IMR-90 (cell line): ENCODE measurements at regions of chr13 and their contacts with region 1.

Region 1: GRCh38 chr13:31909864-31910551 is 121.6 kb upstream of the FRY start:
- DNase-seq: peak; percentile 70
- ATAC-seq: peak; percentile 66
- H3K4me3 ChIP-seq: no peak overlapping the region
- H3K27ac ChIP-seq: no peak overlapping the region
- H3K4me1 ChIP-seq: no peaks in the 10 kb centered on the region; the same call in 1 of the 2 replicates
- H3K27me3 ChIP-seq: peaks cover 8% of the 10 kb centered on the region; the same call in 1 of the 2 replicates
- CTCF ChIP-seq: peak; percentile 90
- POLR2A ChIP-seq: no peak
- RAD21 ChIP-seq: peak; percentile 88

Region 2: DNA sequence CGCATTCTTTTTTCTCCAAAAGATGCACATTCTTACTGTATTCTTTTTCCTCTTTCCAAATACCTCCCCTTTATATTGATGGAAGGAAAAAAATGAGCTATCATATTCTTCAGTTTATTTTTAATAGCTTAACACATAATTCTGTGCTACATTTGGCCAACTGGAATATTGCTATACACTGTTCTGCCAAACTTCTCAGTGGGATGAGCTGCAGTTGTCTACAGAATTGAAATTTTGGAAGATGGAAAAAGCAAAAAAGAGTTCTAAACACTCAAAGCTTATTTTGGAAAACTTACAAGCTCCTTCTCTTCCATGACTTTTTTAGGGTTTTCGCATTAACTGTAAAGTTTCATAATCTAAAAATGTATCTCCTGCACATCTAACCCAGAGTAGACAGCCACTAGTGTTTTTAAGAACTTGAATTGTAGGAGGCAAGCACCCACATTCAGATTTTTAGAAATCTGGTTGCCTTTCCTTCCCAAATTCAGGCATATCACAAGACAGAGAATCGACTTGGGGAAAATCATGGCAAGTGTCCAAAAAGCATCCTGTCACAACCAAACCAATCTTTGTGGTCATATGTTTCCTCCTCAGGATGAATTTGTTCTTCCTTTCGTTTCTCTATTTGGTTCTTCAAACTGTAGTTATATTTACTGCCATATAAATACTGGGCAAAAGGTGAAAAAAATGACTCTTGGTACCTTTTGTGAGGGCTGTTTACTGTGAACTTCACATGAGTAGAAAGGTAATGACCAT is 10.1 kb after region 1 on chr13:
- CTCF ChIA-PET with region 1: interaction called, 27 read pairs
- POLR2A ChIA-PET with region 1: no interaction called
- dilution Hi-C with region 1: no loop called
- in situ Hi-C with region 1: no loop called
- intact Hi-C with region 1: no loop called
- DNase-seq: no peak
- ATAC-seq: no peak; the same call in 1 of the 2 replicates
- H3K4me3 ChIP-seq: no peak overlapping the region
- H3K27ac ChIP-seq: peak overlapping the region; percentile 67; the same call in 1 of the 2 replicates
- H3K4me1 ChIP-seq: peaks cover 2% of the 10 kb centered on the region; the same call in 1 of the 2 replicates
- H3K27me3 ChIP-seq: no peaks in the 10 kb centered on the region
- CTCF ChIP-seq: no peak
- POLR2A ChIP-seq: no peak
- RAD21 ChIP-seq: no peak

Region 3: GRCh38 chr13:32031025-32031814 is 121.2 kb after region 1 on chr13 and contains the start of gene FRY:
- CTCF ChIA-PET with region 1: interaction called, 6 read pairs
- POLR2A ChIA-PET with region 1: no interaction called
- dilution Hi-C with region 1: no loop called
- in situ Hi-C with region 1: no loop called
- intact Hi-C with region 1: loop called (anchors 5 kb)
- DNase-seq: peak; percentile 58
- ATAC-seq: peak; percentile 89
- H3K4me3 ChIP-seq: peak within 1 kb of the TSS; percentile 65
- H3K27ac ChIP-seq: peak within 1 kb of the TSS; percentile 56
- H3K4me1 ChIP-seq: peaks cover 8% of the 10 kb centered on the region
- H3K27me3 ChIP-seq: no peaks in the 10 kb centered on the region
- CTCF ChIP-seq: 0 out of 2 replicates have a peak, but pooled peaks have one; percentile 2
- POLR2A ChIP-seq: no peak
- RAD21 ChIP-seq: no peak; the same call in 1 of the 2 replicates
- total RNA-seq, gene FRY: 3.0 and 4.2 TPM in 2 replicates

Region 4: DNA sequence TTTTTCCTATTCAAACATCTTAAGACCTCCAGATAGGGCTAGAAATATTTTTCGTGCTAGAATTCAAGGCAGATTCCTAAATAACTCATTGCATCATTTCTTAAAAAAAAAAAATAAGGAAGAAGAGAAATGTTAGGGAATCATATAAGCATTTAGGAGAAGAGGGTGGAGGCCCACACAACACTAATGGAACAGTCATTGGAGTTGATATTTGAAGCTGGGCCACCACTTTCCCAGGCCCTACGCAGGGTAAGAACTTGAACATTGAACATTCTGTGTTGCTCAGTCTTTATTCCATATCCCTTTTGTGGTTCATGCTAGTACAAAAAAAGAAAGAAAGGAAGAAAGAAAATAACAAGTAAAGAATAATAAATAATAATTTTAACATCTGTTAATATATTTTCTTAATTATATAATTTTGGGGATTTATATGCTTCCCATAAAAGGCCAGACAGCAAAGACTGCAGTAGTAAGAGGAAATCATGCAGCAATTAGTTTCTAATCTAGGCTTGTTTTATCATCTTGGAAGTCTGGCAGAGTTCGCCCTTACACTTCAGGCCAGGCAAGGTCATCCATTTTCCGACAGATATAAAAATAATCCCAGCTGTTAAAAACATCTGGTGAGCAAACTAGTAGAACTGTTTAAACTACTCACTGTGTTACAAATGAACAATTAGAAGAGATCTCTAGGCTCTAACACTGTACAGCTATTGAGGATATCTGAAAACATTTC is 249.3 kb after region 1 on chr13:
- CTCF ChIA-PET with region 1: no interaction called
- POLR2A ChIA-PET with region 1: no interaction called
- dilution Hi-C with region 1: no loop called
- in situ Hi-C with region 1: no loop called
- intact Hi-C with region 1: loop called (anchors 5 kb)
- DNase-seq: peak; percentile 45
- ATAC-seq: peak; percentile 80
- H3K4me3 ChIP-seq: no peak overlapping the region
- H3K27ac ChIP-seq: peak overlapping the region; percentile 79; the same call in 1 of the 2 replicates
- H3K4me1 ChIP-seq: peaks cover 9% of the 10 kb centered on the region
- H3K27me3 ChIP-seq: no peaks in the 10 kb centered on the region
- CTCF ChIP-seq: no peak
- POLR2A ChIP-seq: no peak
- RAD21 ChIP-seq: no peak

Region 5: DNA sequence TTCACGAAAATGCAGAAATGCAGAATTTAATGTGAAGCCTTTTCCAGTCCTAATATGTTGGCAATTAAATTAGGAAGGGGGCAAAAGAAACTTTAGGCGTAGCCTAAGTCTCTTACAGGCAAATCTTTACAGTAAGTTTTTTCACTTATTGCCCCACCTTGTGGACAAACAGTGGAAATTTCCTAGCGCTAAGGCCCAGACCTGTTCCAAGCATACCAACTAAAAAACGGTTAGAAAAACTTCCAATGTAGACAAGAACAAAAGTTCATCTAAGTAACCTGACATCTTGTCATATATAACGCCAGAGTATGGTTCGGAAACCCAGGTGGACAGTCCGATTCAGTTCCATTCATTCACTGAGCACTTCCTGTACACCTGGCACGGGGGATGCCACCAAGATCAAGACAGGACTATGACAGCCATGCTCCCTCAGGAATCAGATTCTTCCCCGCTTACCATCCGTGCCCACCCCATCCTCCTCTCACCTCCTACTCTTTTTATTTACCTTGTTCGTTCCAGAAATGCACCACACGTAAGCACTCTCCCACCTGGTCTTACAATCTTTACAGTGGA is 400.2 kb after region 1 on chr13:
- CTCF ChIA-PET with region 1: interaction called, 3 read pairs
- POLR2A ChIA-PET with region 1: no interaction called
- dilution Hi-C with region 1: no loop called
- in situ Hi-C with region 1: loop called (anchors 5 kb)
- intact Hi-C with region 1: loop called (anchors 1 kb)
- DNase-seq: peak; percentile 72
- ATAC-seq: peak; percentile 96
- H3K4me3 ChIP-seq: no peak overlapping the region
- H3K27ac ChIP-seq: peak overlapping the region; percentile 7; the same call in 1 of the 2 replicates
- H3K4me1 ChIP-seq: peaks cover 8% of the 10 kb centered on the region
- H3K27me3 ChIP-seq: no peaks in the 10 kb centered on the region
- CTCF ChIP-seq: peak; percentile 78
- POLR2A ChIP-seq: no peak
- RAD21 ChIP-seq: peak; percentile 73